A673 (cell line): ENCODE measurements at regions of chr17 and their contacts with region 1.

Region 1: GRCh38 chr17:80374732-80375585 is 40.0 kb upstream of the ENDOV start:
- DNase-seq: no peak
- H3K4me3 ChIP-seq: no peak overlapping the region
- H3K27ac ChIP-seq: no peak overlapping the region
- H3K4me1 ChIP-seq: no peaks in the 10 kb centered on the region
- H3K27me3 ChIP-seq: no peaks in the 10 kb centered on the region
- CTCF ChIP-seq: no peak

Region 2: GRCh38 chr17:80454557-80455335 is 79.8 kb after region 1 on chr17:
- CTCF ChIA-PET with region 1: no interaction called
- POLR2A ChIA-PET with region 1: no interaction called
- intact Hi-C with region 1: no loop called
- DNase-seq: peak; percentile 97
- H3K4me3 ChIP-seq: peak overlapping the region; percentile 87
- H3K27ac ChIP-seq: peak overlapping the region; percentile 95
- H3K4me1 ChIP-seq: peaks cover 3% of the 10 kb centered on the region
- H3K27me3 ChIP-seq: no peaks in the 10 kb centered on the region
- CTCF ChIP-seq: no peak

Region 3: DNA sequence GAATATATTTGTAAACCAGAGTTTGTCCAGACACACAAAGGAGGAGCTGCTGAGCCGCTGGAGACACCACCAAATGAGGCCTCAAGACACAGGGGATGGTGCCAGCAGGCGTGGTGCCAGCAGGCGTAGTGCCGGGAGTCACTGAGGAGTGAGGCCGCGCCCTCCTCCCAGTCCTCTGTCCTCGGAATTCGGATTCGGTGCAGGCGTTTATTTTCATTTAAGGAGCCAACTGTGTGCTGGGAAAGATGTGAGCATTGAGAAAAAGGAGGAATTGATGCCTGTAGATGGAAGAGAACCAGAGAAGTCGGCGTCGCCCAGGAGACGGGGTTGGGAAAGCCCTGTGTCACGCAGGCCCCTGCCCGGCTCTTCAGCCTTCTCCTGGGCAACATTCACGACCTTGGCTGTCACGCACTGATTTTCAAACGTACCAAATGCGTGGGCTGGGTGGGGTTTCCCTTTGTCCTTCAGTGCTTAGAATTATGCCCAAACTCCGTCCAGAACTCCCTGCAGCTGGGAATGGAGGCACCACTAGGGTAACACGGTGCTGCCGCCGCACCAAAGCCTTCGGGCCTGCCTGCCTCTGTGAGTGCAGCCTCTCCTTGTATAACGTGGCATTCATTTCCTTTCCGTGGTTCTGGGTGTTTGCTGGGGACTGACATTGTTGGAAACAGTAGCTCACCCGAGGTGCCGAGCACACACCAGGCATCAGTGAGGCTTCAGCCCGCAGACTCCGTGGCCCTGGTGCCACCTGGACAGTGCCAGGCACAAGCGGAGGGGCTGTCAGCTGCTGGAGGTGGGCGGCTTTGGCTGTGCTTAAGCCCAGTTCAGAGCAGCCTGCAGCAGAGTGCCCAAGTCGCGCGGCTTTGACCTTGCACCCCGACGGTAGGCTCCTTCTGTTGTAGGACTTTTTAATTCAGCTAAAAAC is 567.7 kb after region 1 on chr17:
- CTCF ChIA-PET with region 1: no interaction called
- POLR2A ChIA-PET with region 1: interaction called, 10 read pairs
- intact Hi-C with region 1: no loop called
- DNase-seq: peak; percentile 92
- H3K4me3 ChIP-seq: no peak overlapping the region
- H3K27ac ChIP-seq: peak overlapping the region; percentile 12
- H3K4me1 ChIP-seq: peaks cover 33% of the 10 kb centered on the region
- H3K27me3 ChIP-seq: no peaks in the 10 kb centered on the region
- CTCF ChIP-seq: no peak; the same call in 1 of the 2 replicates